Activated B cell treated with CpG ODN at 0.5 μM for 24 hours (primary cell): ENCODE measurements at regions of chr1 and their contacts with region 1.

Region 1: DNA sequence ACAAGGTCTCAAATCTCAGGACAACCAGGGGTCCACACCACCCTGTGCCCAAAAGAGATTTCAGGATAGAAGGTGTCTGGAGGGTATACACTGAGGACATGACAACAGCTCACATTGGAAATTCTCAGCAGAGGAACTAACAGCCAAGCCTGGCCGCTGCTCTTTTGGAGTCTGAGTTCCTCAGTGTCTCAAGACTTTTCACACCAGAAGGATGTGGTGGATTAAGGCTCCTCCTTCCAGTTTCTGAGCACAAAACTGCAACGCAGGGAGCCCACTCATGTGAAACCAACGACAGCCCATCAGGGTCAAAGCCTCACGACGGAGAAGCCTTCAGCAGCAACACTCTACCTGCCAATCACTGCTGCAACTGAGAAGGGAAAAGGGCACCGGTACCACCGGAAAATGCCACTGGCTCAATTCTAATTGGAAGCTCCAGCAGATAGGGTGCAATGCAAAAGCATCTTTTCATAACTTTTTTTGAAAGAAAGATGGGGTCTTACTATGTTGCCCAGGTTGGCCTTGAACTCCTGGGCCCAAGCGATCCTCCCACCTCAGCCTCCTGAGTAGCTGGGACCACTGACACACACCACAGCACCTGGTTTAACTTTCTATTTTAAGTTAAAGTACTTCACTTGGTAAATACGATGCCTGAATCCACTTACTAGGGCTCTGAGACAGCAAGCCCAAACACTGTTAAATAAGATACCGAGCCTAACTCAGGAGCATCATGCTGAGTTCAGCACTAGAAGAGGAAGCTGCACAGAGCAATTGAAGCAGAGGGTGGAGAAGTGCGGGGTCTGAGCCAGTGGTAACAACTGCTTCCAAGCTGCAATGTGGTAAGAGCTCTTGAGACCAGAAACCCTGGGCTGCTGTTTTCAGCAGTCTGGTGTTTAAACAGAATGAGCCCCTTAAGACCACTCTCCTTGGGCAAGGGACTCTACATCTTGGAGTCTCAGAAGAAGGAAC is 7.8 kb downstream of the CAPZB start:
- DNase-seq: no peak
- ATAC-seq: peak; percentile 74
- H3K4me3 Mint-ChIP-seq: peak overlapping the region; percentile 76
- H3K27ac Mint-ChIP-seq: peak overlapping the region; percentile 93
- H3K4me1 Mint-ChIP-seq: peaks cover 93% of the 10 kb centered on the region
- H3K27me3 Mint-ChIP-seq: no peaks in the 10 kb centered on the region
- CTCF ChIP-seq: no peak

Region 2: GRCh38 chr1:19414515-19415121 is 62.9 kb before region 1 on chr1:
- CTCF ChIA-PET with region 1: no interaction called
- POLR2A ChIA-PET with region 1: interaction called, 3 read pairs
- intact Hi-C with region 1: loop called (anchors 5 kb)
- DNase-seq: no peak
- ATAC-seq: no peak
- H3K4me3 Mint-ChIP-seq: no peak overlapping the region
- H3K27ac Mint-ChIP-seq: no peak overlapping the region
- H3K4me1 Mint-ChIP-seq: peaks cover 52% of the 10 kb centered on the region
- H3K27me3 Mint-ChIP-seq: no peaks in the 10 kb centered on the region
- CTCF ChIP-seq: no peak

Region 3: DNA sequence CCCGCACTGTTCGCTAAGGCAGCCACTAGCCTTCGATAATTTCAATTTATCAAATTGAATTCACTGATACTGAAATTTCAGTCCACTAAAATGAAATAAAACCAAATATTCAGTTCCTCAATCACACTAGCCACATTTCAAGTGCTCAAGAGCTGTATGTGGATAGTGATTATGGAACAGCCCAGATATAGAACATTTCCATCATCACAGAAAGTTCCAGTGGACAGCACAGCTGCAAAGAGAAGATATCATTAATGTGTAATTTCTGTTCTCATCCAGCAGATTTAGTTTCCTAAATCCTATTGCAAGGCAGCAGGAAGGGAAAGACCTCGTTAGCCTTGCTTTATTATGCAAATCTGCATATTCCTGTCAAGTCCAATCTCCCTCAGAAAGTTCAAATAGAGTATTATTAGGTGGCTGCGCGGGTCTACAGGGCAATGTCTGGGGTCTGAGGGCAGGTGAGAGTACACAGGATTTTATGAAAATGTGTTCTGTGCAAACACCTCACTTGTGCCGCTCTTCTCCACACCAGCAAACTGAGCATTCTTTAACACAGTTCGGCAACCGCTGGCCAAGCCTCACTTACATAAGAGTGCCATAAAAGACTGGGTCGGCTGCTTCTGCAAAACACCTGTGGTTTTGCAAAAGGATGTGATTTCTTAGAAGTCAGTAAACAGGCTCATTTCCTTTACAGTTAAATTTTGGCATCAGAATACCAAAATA is 14.6 kb before region 1 on chr1:
- CTCF ChIA-PET with region 1: no interaction called
- POLR2A ChIA-PET with region 1: interaction called, 38 read pairs
- intact Hi-C with region 1: loop called (anchors 2 kb)
- DNase-seq: no peak
- ATAC-seq: peak; percentile 75
- H3K4me3 Mint-ChIP-seq: peak overlapping the region; percentile 74
- H3K27ac Mint-ChIP-seq: peak overlapping the region; percentile 83
- H3K4me1 Mint-ChIP-seq: peaks cover 97% of the 10 kb centered on the region
- H3K27me3 Mint-ChIP-seq: no peaks in the 10 kb centered on the region
- CTCF ChIP-seq: no peak